ENCODE measurements at regions of chr12 and their contacts with region 1.

Region 1: GRCh38 chr12:109020796-109021380 is at the start of gene SVOP:
- DNase-seq: peak; percentile 76 to 92 (median 87)
- H3K4me3 ChIP-seq: peak within 1 kb of the TSS; percentile 11 to 68 (median 50)
- H3K27ac ChIP-seq: peak within 1 kb of the TSS in 54 of 59 donors; percentile 29 to 85 (median 71)
- H3K27me3 ChIP-seq: no peaks in the 10 kb centered on the region
- CTCF ChIP-seq: peak in 22 of 56 donors; percentile 4 to 55 (median 30)
- total RNA-seq, gene SVOP: 16.3 to 117 (median 63.9) TPM

Region 2: DNA sequence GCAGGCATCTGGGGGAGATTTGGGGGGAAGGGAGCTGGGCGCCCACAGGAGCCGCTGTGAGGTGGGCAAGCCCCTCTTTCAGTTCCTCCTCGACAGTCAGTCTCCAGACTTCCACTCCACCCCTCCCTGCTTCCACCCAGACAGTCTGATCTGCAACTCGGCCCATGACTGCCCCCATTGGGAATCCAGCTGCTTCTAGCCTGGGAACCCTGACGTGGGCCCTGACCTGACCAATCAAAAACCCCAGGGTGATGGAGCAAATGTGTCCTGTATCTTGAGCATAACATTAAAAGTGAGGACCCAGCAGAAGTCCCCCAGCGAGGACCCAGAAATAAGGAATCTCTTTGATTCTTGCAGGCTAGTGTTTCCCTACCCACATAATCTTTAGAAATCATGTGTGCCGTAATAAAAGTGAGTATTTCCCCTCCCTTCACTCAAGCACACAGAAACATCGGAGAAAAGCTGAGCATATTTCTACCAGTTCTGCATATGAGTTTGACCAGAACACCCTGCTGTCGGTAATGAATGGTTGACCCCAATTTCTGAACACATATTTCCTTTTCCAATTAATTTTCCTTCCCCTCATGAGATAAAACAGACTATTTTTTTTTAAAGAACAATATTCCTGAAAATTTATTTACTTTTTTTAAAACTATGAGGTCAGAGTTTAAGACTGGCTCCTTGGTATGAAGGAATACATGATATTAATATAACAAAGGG is 169.9 kb before region 1 on chr12:
- intact Hi-C with region 1: loop called in 1 of 2 experiments (anchors 10 kb)
- DNase-seq: peak in 1 of 10 donors; percentile 49
- H3K4me3 ChIP-seq: peak overlapping the region in 5 of 59 donors; percentile 23 to 47 (median 38)
- H3K27ac ChIP-seq: peak overlapping the region in 43 of 59 donors; percentile 1 to 95 (median 51)
- H3K27me3 ChIP-seq: no peaks in the 10 kb centered on the region
- CTCF ChIP-seq: peak in 1 of 56 donors; percentile 10

Region 3: GRCh38 chr12:109052414-109053323 is 31.8 kb after region 1 on chr12 and contains the start of gene USP30:
- intact Hi-C with region 1: loop called in 1 of 2 experiments (anchors 2 kb)
- DNase-seq: peak; percentile 71 to 91 (median 84)
- H3K4me3 ChIP-seq: peak within 1 kb of the TSS; percentile 71 to 100 (median 94)
- H3K27ac ChIP-seq: peak within 1 kb of the TSS; percentile 54 to 99 (median 93)
- H3K27me3 ChIP-seq: no peaks in the 10 kb centered on the region
- CTCF ChIP-seq: peak in 42 of 56 donors; percentile 9 to 60 (median 32)
- total RNA-seq, gene USP30: 22.1 to 52.9 (median 33.6) TPM

Measured in dorsolateral prefrontal cortex (tissue), 120 donors.